Breast epithelium (tissue), 4 donors: ENCODE measurements at regions of chr1 and their contacts with region 1.

Region 1: DNA sequence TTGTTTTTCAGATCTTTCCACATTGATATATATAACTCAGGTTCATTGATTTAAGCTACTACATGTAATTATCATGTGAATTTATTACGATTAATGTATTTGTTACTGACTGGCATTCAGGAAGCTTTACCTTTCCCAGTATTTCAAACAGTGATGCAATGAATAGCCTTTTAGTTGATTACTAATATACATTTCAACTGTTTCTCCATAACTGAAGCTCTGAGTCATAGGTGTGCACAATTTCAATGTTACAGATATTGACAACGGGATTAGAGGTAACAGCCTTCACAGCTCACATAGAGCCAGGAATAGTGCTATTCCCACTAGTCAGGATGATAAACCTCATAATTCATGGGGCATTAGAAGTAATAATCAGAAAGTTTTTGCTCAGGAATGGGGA is 25.1 kb downstream of the RAVER2 start:
- DNase-seq: no peak
- H3K4me3 ChIP-seq: no peak overlapping the region
- H3K27ac ChIP-seq: no peak overlapping the region
- H3K4me1 ChIP-seq: no peaks in the 10 kb centered on the region
- H3K27me3 ChIP-seq: no peaks in the 10 kb centered on the region
- CTCF ChIP-seq: no peak
- POLR2A ChIP-seq: no peak

Region 2: DNA sequence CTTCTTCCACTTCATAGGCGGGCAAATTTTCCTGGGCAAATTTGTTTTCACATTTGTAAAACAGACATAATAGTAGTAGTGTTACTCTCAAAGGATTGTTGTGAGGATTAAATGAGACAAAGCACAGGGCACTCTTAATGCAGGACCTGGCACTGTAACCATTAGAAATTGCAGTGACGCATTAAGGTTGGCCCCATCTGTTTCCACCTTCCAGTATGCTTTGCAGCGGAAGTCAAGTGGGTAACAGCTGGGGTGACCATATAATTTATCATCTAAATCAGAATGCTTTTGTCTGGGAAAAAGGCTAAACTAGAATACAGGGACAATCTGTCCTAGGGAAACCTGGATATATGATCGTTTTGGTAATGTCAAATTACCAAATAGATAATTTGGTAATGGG is 432.5 kb before region 1 on chr1:
- intact Hi-C with region 1: loop called (anchors 5 kb)
- DNase-seq: no peak
- H3K4me3 ChIP-seq: no peak overlapping the region
- H3K27ac ChIP-seq: no peak overlapping the region
- H3K4me1 ChIP-seq: no peaks in the 10 kb centered on the region
- H3K27me3 ChIP-seq: no peaks in the 10 kb centered on the region
- CTCF ChIP-seq: no peak
- POLR2A ChIP-seq: no peak

Region 3: GRCh38 chr1:64744492-64745180 is 25.3 kb before region 1 on chr1 and contains the start of gene RAVER2:
- intact Hi-C with region 1: no loop called
- DNase-seq: peak; percentile 61 to 68
- H3K4me3 ChIP-seq: peak within 1 kb of the TSS; percentile 68 to 94 (median 85)
- H3K27ac ChIP-seq: peak within 1 kb of the TSS; percentile 80 to 92
- H3K4me1 ChIP-seq: peaks cover 0 to 5% of the 10 kb centered on the region in 2 donors
- H3K27me3 ChIP-seq: no peaks in the 10 kb centered on the region
- CTCF ChIP-seq: peak in 2 of 3 donors; percentile 20 to 23
- POLR2A ChIP-seq: no peak
- total RNA-seq, gene RAVER2: 6.6 to 21.1 (median 17.0) TPM

Region 4: DNA sequence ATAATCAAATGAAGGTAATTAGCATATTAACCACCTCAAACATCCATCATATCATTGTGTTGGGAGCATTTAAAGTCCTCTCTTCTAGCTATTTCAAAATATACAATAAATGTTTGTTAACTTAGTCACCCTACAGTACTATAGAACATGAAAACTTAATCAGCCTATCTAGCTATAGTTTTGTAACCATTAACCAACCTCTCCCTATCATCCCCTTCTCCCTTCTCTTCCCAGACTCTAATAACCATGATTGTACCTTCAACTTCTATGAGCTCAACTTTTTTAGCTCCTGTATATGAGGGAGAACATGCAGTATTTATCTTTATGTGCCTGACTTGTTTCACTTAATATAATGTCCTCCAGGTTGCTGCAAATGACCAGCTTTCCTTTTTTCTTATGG is 28.9 kb after region 1 on chr1:
- intact Hi-C with region 1: no loop called
- DNase-seq: no peak
- H3K4me3 ChIP-seq: no peak overlapping the region
- H3K27ac ChIP-seq: no peak overlapping the region
- H3K4me1 ChIP-seq: no peaks in the 10 kb centered on the region
- H3K27me3 ChIP-seq: no peaks in the 10 kb centered on the region
- CTCF ChIP-seq: no peak
- POLR2A ChIP-seq: no peak